Naive thymus-derived CD4-positive, alpha-beta T cell (primary cell): ENCODE measurements at regions of chr16 and their contacts with region 1.

Region 1: GRCh38 chr16:68214726-68215125 is 21.2 kb downstream of the ESRP2 start:
- DNase-seq: no peak
- ATAC-seq: no peak
- H3K4me3 ChIP-seq: no peak overlapping the region
- H3K4me3 Mint-ChIP-seq: no peak overlapping the region
- H3K27ac ChIP-seq: peak overlapping the region; percentile 17
- H3K27ac Mint-ChIP-seq: peak overlapping the region; percentile 56 to 97 (median 79)
- H3K4me1 ChIP-seq: peaks cover 0 to 22% of the 10 kb centered on the region in 2 donors
- H3K4me1 Mint-ChIP-seq: peaks cover 31 to 66% (median 53%) of the 10 kb centered on the region in 7 donors
- H3K27me3 ChIP-seq: no peaks in the 10 kb centered on the region
- H3K27me3 Mint-ChIP-seq: no peaks in the 10 kb centered on the region

Region 2: DNA sequence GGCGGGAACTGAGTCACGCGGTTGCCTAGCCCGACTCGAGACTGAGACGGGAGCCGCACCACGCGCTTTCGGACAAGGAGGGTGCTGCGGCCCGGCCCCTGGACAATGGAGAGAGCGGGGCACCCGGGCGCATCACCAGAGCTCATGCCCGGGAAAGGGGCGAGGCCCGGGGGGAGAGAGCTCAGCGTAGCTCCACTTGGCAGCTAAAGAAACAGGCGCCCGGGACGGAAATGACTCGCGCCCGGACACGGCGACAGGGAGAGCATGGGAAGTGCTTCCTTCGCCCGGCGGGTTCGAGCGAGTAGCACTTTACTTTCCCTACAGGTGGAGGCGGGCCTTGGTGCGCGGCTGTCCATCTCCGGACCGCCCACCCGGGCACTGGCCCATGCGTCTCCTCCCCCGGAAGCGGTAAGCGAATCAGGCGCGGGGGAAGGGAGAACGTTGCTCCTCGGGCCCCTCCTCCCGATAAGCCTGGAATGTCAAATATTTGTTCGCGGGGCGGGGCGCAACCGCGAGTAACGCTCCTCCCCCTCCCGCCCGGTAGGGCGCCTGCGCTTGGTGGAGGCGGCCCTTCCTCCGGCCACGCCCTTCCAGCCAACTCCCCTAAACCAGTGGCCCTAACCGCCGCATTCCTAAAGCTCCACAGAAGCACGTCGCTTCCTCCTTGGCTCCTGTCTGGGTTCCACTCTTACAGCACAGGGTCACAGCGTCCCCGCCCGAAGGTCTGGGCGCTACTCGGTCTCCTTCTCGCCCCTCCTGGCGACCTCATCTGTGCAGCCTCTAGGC is 22.7 kb after region 1 on chr16:
- CTCF ChIA-PET with region 1: interaction called, 3 read pairs
- POLR2A ChIA-PET with region 1: interaction called, 4 read pairs
- intact Hi-C with region 1: loop called in 1 of 2 experiments (anchors 2 kb)
- DNase-seq: peak; percentile 71 to 90 (median 83)
- ATAC-seq: peak; percentile 88
- H3K4me3 ChIP-seq: peak overlapping the region; percentile 91
- H3K4me3 Mint-ChIP-seq: peak overlapping the region; percentile 90 to 99 (median 96)
- H3K27ac ChIP-seq: peak overlapping the region; percentile 67
- H3K27ac Mint-ChIP-seq: peak overlapping the region; percentile 72 to 95 (median 87)
- H3K4me1 ChIP-seq: peaks cover 6 to 10% of the 10 kb centered on the region in 2 donors
- H3K4me1 Mint-ChIP-seq: peaks cover 23 to 45% (median 34%) of the 10 kb centered on the region in 7 donors
- H3K27me3 ChIP-seq: no peaks in the 10 kb centered on the region
- H3K27me3 Mint-ChIP-seq: peaks cover 0 to 13% (median 0%) of the 10 kb centered on the region in 5 donors